B cell (primary cell): ENCODE measurements at regions of chr20 and their contacts with region 1.

Region 1: GRCh38 chr20:49132995-49133478 is 55.1 kb downstream of the STAU1 start:
- DNase-seq: peak; percentile 67
- ATAC-seq: no peak
- H3K4me3 ChIP-seq: no peak overlapping the region
- H3K4me3 Mint-ChIP-seq: no peak overlapping the region
- H3K27ac ChIP-seq: peak overlapping the region in 1 of 2 donors; percentile 34
- H3K27ac Mint-ChIP-seq: no peak overlapping the region
- H3K4me1 ChIP-seq: no peaks in the 10 kb centered on the region
- H3K4me1 Mint-ChIP-seq: no peaks in the 10 kb centered on the region
- H3K27me3 ChIP-seq: no peaks in the 10 kb centered on the region
- H3K27me3 Mint-ChIP-seq: no peaks in the 10 kb centered on the region
- CTCF ChIP-seq: peak; percentile 66

Region 2: GRCh38 chr20:49186535-49187329 is 53.7 kb after region 1 on chr20:
- CTCF ChIA-PET with region 1: interaction called, 5 read pairs
- POLR2A ChIA-PET with region 1: no interaction called
- intact Hi-C with region 1: loop called (anchors 5 kb)
- DNase-seq: peak; percentile 68
- ATAC-seq: no peak
- H3K4me3 ChIP-seq: peak overlapping the region; percentile 54 to 74 (median 67)
- H3K4me3 Mint-ChIP-seq: peak overlapping the region; percentile 88
- H3K27ac ChIP-seq: peak overlapping the region; percentile 79 to 84
- H3K27ac Mint-ChIP-seq: peak overlapping the region; percentile 74
- H3K4me1 ChIP-seq: peaks cover 14 to 20% of the 10 kb centered on the region in 2 donors
- H3K4me1 Mint-ChIP-seq: peaks cover 46% of the 10 kb centered on the region
- H3K27me3 ChIP-seq: no peaks in the 10 kb centered on the region
- H3K27me3 Mint-ChIP-seq: no peaks in the 10 kb centered on the region
- CTCF ChIP-seq: no peak

Region 3: GRCh38 chr20:50165684-50166554 is 1032.9 kb after region 1 on chr20:
- CTCF ChIA-PET with region 1: no interaction called
- POLR2A ChIA-PET with region 1: no interaction called
- intact Hi-C with region 1: no loop called
- DNase-seq: peak; percentile 74
- ATAC-seq: peak; percentile 97
- H3K4me3 ChIP-seq: peak overlapping the region in 4 of 5 experiments; percentile 24 to 56 (median 47)
- H3K4me3 Mint-ChIP-seq: peak overlapping the region; percentile 84
- H3K27ac ChIP-seq: no peak overlapping the region
- H3K27ac Mint-ChIP-seq: peak overlapping the region; percentile 70
- H3K4me1 ChIP-seq: peaks cover 9 to 10% of the 10 kb centered on the region in 2 donors
- H3K4me1 Mint-ChIP-seq: peaks cover 10% of the 10 kb centered on the region
- H3K27me3 ChIP-seq: peaks cover 0 to 6% (median 2%) of the 10 kb centered on the region in 4 experiments
- H3K27me3 Mint-ChIP-seq: peaks cover 12% of the 10 kb centered on the region
- CTCF ChIP-seq: no peak